ENCODE measurements at regions of chr19 and their contacts with region 1.

Region 1: DNA sequence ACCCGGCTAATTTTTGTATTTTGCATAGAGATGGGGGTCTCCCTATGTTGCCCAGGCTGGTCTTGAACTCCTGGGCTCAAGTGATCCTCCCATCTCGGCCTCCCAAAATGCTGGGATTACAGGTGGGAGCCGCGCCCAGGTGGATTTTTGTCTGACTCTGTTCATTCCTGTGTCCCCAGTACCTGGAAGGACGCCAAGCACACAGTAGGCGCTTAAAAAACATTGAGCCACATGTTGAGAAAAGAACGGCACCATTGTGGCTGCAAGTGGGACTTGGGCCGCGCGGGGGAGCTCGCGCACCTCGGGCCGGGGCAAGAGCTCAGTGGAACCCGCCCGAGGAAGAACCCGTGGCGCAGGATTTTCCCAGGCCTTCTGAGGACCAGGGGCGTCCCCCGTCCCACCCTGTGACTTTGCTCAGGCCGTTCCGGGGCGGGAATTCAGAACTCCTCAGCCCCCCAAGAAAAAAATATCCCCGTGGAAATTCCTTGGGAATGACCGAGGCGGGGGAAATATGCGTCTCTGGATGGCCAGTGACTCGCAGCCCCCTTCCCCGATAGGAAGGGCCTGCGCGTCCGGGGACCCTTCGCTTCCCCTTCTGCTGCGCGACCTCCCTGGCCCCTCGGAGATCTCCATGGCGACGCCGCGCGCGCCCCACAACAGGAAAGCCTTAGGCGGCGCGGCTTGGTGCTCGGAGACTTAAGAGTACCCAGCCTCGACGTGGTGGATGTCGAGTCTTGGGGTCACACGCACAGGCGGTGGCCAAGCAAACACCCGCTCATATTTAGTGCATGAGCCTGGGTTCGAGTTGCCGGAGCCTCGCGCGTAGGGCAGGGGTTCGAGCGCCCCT is 1.4 kb upstream of the ICAM1 start:
- DNase-seq: no peak
- H3K4me3 ChIP-seq: peak overlapping the region; percentile 27
- CTCF ChIP-seq: peak; percentile 97

Region 2: GRCh38 chr19:10259162-10259905 is 10.2 kb before region 1 on chr19:
- CTCF ChIA-PET with region 1: interaction called, 98 read pairs
- POLR2A ChIA-PET with region 1: no interaction called
- DNase-seq: no peak
- H3K4me3 ChIP-seq: no peak overlapping the region
- CTCF ChIP-seq: peak; percentile 71

Region 3: DNA sequence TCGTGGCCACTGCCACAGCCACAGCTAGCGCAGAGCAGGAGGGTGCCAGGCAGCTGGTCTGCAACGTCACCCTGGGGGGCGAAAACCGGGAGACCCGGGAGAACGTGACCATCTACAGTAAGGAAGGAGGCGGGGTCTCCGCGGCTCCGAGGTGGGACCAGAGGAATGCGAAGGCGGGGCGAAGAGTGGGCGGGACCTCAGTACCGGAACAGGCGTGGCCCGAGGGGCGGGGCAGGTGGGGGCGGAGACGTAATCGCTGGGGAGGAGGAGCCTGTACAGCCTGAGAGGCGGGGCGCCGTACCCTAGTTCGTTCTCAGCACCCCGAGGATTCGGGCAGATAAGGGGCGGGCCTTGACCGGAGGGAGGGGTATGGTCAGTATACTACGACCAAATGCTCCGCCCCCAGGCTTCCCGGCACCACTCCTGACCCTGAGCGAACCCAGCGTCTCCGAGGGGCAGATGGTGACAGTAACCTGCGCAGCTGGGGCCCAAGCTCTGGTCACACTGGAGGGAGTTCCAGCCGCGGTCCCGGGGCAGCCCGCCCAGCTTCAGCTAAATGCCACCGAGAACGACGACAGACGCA is 22.7 kb after region 1 on chr19:
- CTCF ChIA-PET with region 1: interaction called, 22 read pairs
- POLR2A ChIA-PET with region 1: interaction called, 6 read pairs
- DNase-seq: no peak
- H3K4me3 ChIP-seq: peak overlapping the region; percentile 60
- CTCF ChIP-seq: no peak

Region 4: GRCh38 chr19:10332955-10333757 is 63.6 kb after region 1 on chr19 and contains the start of gene RAVER1:
- CTCF ChIA-PET with region 1: interaction called, 24 read pairs
- POLR2A ChIA-PET with region 1: interaction called, 10 read pairs
- DNase-seq: peak; percentile 67
- H3K4me3 ChIP-seq: peak within 1 kb of the TSS; percentile 87
- CTCF ChIP-seq: no peak

Region 5: GRCh38 chr19:10380313-10381102 is 111.0 kb after region 1 on chr19 and contains the start of gene TYK2:
- CTCF ChIA-PET with region 1: interaction called, 1,180 read pairs
- POLR2A ChIA-PET with region 1: interaction called, 11 read pairs
- DNase-seq: peak; percentile 82
- H3K4me3 ChIP-seq: peak within 1 kb of the TSS; percentile 96
- CTCF ChIP-seq: no peak

Region 6: GRCh38 chr19:10388957-10389356 is 119.4 kb after region 1 on chr19:
- CTCF ChIA-PET with region 1: interaction called, 1,180 read pairs
- POLR2A ChIA-PET with region 1: interaction called, 12 read pairs
- DNase-seq: no peak
- H3K4me3 ChIP-seq: no peak overlapping the region
- CTCF ChIP-seq: peak; percentile 84

Region 7: DNA sequence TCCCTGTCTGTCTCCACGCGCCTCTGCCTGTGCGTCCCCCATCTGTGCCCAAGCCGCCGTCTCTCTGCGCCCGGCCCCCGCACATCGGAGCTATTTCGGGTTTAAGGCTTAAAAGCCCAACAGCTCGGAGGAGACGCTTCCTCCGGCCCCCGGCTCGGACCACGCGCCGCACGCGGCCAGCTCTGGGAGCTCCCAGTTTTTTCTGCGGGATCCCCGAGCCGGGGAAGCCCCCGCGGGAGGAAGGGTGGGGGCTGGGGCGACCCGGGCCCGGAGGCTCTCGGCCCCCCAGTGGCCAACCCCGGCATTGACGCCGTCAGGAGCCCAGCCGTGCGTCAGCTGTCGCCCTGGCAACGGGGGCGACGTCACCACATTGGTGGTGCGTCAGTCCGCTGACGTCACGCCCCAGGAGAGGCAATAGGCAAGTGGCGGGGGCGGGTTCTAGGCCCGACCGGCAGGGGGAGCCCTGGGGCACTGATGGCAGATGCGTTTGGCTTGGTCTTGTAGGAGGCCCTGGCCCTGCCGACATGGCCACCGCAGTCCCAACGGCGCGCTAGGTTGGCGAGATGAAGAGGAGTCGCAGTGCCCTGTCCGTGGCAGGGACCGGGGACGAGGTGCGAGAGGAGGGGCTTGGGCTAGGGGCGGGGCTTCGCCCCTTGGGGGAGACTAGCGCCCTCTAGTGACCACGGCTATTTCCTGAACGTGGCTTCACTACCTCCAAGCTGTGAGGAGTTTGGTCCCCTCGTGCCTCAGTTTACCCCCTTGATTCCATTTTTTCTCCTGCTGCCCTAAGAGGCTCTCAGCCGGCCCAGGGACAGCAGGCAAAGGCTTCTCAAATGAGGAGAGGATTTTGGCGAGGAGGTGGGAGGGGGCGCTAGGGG is 147.1 kb after region 1 on chr19:
- CTCF ChIA-PET with region 1: interaction called, 13 read pairs
- POLR2A ChIA-PET with region 1: no interaction called
- DNase-seq: no peak
- H3K4me3 ChIP-seq: peak overlapping the region; percentile 64
- CTCF ChIP-seq: peak; percentile 83

Measured in AG04449 (cell line).